Stomach (tissue), 19 donors: ENCODE measurements at regions of chr10 and their contacts with region 1.

Region 1: DNA sequence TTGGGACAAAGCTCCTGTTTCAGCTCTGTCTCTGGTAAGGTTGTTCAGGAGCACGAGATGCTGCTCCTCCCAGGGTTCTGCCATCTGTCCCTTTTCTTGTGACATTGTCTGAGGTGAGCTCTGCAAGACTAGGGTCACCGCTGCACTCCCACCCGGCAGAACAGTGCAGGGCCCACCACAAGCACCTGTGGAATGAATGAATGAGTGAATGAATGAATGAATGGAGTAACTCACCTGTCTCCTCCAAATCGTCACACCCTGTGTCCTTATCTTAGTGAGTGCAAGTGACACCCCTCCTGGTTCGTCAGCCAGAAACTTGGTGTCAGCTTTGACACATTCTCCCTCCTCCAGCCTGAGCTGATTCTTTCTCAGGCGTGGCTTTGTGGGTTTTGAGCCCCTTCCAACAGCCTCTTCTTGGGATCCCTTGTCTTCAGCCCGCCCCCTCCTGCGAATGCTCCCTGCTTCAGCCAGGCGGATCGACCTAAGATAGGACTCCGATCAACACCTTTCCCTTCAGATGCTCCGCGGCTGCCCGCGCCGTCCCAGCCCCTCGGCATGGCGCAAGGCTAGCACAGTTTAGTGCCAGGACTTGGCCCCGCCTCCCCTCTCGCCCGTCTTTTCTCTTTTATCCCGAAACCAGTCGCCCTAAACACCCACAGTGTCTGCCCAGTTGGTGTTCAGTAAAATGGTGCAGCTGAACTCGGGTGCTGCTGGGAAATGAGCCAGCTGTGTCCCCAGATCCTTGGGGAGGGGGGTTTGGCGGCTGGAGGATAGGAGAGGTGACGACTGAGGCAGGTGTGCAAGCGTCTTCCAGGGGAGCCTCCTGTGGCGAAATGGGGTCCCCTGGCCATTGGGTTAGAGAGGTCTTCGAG is 89.3 kb downstream of the BEND7 start:
- DNase-seq: peak; percentile 32 to 40
- H3K4me3 ChIP-seq: peak overlapping the region; percentile 35 to 50 (median 38)
- H3K27ac ChIP-seq: no peak overlapping the region
- H3K4me1 ChIP-seq: peaks cover 12 to 21% (median 15%) of the 10 kb centered on the region in 4 donors
- H3K27me3 ChIP-seq: peaks cover 0 to 53% (median 9%) of the 10 kb centered on the region in 3 donors
- CTCF ChIP-seq: no peak
- EP300 ChIP-seq: no peak
- POLR2A ChIP-seq: no peak

Region 2: DNA sequence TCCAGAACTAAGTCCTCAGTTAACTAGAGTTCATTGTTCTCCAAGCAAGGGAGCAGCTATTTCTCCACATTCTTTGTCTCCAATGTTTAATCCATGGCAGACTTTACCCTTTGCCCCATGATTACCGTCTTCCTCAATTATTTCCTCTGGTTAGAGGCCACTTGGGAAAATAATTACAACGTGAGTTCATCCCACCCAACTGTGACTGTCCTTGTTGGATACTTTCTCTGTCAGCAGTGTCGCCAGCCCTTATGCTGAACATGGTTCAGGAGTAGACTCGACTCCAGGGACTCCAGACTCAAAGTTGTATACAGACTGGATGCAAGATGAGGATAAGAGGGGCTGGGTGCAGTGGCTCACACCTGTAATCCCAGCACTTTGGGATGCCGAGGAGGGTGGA is 74.3 kb before region 1 on chr10:
- intact Hi-C with region 1: no loop called
- DNase-seq: no peak
- H3K4me3 ChIP-seq: no peak overlapping the region
- H3K27ac ChIP-seq: no peak overlapping the region
- H3K4me1 ChIP-seq: no peaks in the 10 kb centered on the region
- H3K27me3 ChIP-seq: no peaks in the 10 kb centered on the region
- CTCF ChIP-seq: no peak
- EP300 ChIP-seq: no peak
- POLR2A ChIP-seq: no peak

Region 3: DNA sequence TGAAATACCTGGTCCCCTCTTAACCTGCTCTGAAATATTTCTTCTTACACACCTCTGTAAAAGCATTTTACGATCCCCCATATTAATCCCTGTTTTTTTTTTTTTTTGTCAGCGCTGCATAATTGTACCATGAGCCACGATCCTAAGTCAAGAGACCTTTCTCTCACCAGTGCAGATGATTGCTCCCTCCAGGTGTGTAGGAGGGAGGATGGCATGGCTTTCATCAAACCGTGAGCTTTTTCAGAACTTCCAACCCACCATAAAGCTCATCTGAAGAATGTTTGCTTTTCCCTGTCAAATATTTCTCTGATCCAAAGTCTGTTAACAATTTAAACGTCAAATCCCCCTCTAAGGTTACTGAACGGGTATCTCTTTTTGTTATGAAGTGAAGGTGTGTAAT is 63.3 kb before region 1 on chr10:
- intact Hi-C with region 1: loop called (anchors 5 kb)
- DNase-seq: no peak
- H3K4me3 ChIP-seq: no peak overlapping the region
- H3K27ac ChIP-seq: no peak overlapping the region
- H3K4me1 ChIP-seq: peaks cover 0 to 6% (median 0%) of the 10 kb centered on the region in 4 donors
- H3K27me3 ChIP-seq: peaks cover 0 to 13% (median 0%) of the 10 kb centered on the region in 3 donors
- CTCF ChIP-seq: no peak
- EP300 ChIP-seq: no peak
- POLR2A ChIP-seq: no peak